SK-N-SH (cell line): ENCODE measurements at regions of chr4 and their contacts with region 1.

Region 1: DNA sequence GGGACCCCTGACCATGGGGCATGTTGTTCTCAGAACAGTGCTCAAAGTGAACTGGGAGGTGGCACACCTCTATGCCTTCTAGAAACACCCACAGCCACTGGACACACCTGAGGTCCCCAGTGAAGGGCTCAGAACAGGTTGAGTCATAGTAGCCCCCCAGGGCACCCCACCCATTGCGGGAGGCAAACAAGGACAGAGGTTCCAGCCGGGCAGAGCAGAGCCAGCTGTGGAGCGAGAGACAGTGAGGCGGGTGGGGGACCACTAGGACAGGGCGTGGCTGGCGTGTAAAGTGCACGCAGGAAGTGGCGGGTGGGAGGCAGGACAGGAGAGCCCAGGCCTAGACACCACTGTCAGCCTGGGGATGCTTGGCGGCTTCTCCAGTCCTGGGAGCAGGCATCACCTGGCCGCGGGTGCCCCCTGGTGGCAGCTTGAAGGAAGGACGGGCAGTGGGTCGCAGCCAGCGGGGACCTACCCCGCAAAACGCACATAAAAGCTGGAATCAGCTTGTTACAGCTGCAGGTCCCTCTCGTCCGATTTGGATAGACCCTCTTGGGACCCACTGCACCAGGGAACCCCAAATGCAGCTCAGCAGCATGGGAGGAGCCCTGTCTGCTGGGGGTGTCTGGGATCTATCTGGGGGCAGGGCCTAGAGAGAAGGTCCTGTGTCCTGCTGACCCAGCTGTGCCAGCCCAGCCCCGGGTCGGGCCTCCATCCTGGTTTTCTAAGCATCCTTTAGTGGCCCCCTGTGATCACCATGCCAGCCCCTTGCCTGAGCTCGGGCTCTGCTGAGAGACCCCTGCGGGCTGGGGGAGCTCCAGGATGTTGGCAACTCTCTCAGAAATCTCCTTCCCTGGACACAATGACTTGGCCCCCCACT is 57.6 kb downstream of the WFS1 start:
- DNase-seq: peak; percentile 94
- H3K4me3 ChIP-seq: peak overlapping the region in 1 of 2 experiments; percentile 55; a peak in 1 of 4 replicates
- H3K27ac ChIP-seq: no peak overlapping the region
- H3K4me1 ChIP-seq: peaks cover 0 to 3% of the 10 kb centered on the region in 2 experiments; a peak in 1 of 4 replicates
- H3K27me3 ChIP-seq: no peaks in the 10 kb centered on the region
- CTCF ChIP-seq: peak; percentile 81
- EP300 ChIP-seq: no peak
- RAD21 ChIP-seq: peak; percentile 99

Region 2: GRCh38 chr4:6109842-6110719 is 217.2 kb before region 1 on chr4:
- CTCF ChIA-PET with region 1: interaction called, 10 read pairs
- POLR2A ChIA-PET with region 1: no interaction called
- DNase-seq: no peak
- H3K4me3 ChIP-seq: no peak overlapping the region; a peak in 1 of 4 replicates
- H3K27ac ChIP-seq: peak overlapping the region in 1 of 2 experiments; percentile 89; a peak in 2 of 4 replicates
- H3K4me1 ChIP-seq: peaks cover 0 to 72% of the 10 kb centered on the region in 2 experiments; a peak in 2 of 4 replicates
- H3K27me3 ChIP-seq: no peaks in the 10 kb centered on the region
- CTCF ChIP-seq: no peak
- EP300 ChIP-seq: no peak
- RAD21 ChIP-seq: peak; percentile 15; the same call in 1 of the 2 replicates

Region 3: DNA sequence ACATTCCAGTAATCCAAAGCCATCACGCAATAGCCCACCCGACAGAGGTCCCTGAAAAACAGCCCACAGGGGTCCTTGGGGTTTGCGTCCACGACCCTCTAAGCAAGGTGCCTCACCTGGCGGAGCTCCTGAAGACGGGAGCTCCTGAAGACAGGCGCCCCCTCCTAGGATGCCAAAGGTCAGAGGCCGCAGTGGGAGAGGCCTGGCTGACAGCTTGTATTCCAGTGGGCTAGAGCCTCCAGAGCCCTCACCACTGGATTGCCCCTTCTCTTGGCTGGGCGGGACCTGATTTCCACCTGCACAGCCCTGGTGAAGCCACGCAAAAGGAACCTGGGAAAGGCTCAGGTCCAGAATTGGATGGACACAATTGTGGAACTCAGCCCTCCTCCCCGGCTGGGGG is 87.3 kb before region 1 on chr4:
- CTCF ChIA-PET with region 1: interaction called, 1,048 read pairs
- POLR2A ChIA-PET with region 1: no interaction called
- DNase-seq: no peak
- H3K4me3 ChIP-seq: no peak overlapping the region
- H3K27ac ChIP-seq: no peak overlapping the region
- H3K4me1 ChIP-seq: no peaks in the 10 kb centered on the region; a peak in 1 of 4 replicates
- H3K27me3 ChIP-seq: no peaks in the 10 kb centered on the region
- CTCF ChIP-seq: no peak
- EP300 ChIP-seq: no peak
- RAD21 ChIP-seq: no peak

Region 4: GRCh38 chr4:6308899-6309643 is 18.2 kb before region 1 on chr4:
- CTCF ChIA-PET with region 1: interaction called, 133 read pairs
- POLR2A ChIA-PET with region 1: no interaction called
- DNase-seq: peak; percentile 84
- H3K4me3 ChIP-seq: peak overlapping the region; percentile 54 to 60
- H3K27ac ChIP-seq: peak overlapping the region in 1 of 2 experiments; percentile 69; a peak in 2 of 4 replicates
- H3K4me1 ChIP-seq: peaks cover 0 to 4% of the 10 kb centered on the region in 2 experiments; a peak in 1 of 4 replicates
- H3K27me3 ChIP-seq: no peaks in the 10 kb centered on the region; the same call in 1 of the 2 replicates
- CTCF ChIP-seq: no peak; the same call in 1 of the 2 replicates
- EP300 ChIP-seq: no peak
- RAD21 ChIP-seq: no peak

Region 5: DNA sequence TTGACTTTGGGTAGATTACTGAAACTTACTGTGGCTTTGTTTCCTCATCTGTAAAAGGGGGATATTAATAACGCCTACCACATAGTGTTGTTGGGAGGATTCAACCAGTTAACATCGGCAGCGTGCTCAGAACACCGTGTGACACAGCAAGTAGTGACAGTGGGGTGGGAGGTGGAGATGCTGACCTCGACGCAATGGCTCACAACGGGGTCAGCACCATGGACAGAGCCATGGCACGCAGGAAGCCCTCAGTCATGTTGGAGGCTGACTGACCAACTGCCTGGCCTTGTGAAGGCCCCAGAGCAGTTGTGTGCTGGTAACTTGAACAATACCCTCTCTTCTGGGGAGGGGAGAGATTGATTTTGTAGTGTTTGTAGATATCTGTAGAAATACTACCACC is 35.6 kb after region 1 on chr4:
- CTCF ChIA-PET with region 1: interaction called, 15 read pairs
- POLR2A ChIA-PET with region 1: no interaction called
- DNase-seq: no peak
- H3K4me3 ChIP-seq: no peak overlapping the region
- H3K27ac ChIP-seq: no peak overlapping the region
- H3K4me1 ChIP-seq: peaks cover 0 to 11% of the 10 kb centered on the region in 2 experiments; a peak in 1 of 4 replicates
- H3K27me3 ChIP-seq: no peaks in the 10 kb centered on the region; the same call in 1 of the 2 replicates
- CTCF ChIP-seq: no peak
- EP300 ChIP-seq: no peak
- RAD21 ChIP-seq: no peak

Region 6: DNA sequence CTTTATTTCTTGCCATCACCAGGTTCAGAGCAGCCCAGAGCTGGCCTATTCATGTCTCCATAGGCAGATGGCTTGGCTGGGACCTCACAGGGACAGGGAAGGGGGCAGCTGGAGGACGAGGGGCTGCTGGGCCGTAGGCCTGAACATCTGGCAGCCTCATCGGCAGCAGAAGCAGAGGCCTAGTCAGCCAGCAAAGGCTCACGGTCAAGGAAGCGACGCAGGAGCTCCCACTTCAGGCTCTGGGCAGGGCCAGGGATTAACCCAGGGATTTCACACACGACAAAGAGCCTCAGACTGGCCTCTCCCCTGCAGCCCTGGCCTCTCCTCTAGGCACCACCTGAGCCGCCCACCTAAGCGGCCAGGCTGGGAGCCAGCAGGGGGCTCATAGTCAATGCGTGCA is 201.7 kb after region 1 on chr4:
- CTCF ChIA-PET with region 1: interaction called, 11 read pairs
- POLR2A ChIA-PET with region 1: no interaction called
- DNase-seq: no peak
- H3K4me3 ChIP-seq: no peak overlapping the region
- H3K27ac ChIP-seq: no peak overlapping the region
- H3K4me1 ChIP-seq: no peaks in the 10 kb centered on the region
- H3K27me3 ChIP-seq: no peaks in the 10 kb centered on the region; the same call in 1 of the 2 replicates
- CTCF ChIP-seq: no peak
- EP300 ChIP-seq: no peak
- RAD21 ChIP-seq: no peak